ENCODE measurements at regions of chr10 and their contacts with region 1.

Region 1: GRCh38 chr10:77889277-77889903 is 37.2 kb downstream of the DLG5 start:
- DNase-seq: peak; percentile 69
- ATAC-seq: peak; percentile 73
- H3K4me3 Mint-ChIP-seq: peak overlapping the region; percentile 46
- H3K27ac Mint-ChIP-seq: peak overlapping the region; percentile 97
- H3K4me1 Mint-ChIP-seq: peaks cover 93% of the 10 kb centered on the region
- H3K27me3 Mint-ChIP-seq: no peaks in the 10 kb centered on the region
- CTCF ChIP-seq: no peak

Region 2: DNA sequence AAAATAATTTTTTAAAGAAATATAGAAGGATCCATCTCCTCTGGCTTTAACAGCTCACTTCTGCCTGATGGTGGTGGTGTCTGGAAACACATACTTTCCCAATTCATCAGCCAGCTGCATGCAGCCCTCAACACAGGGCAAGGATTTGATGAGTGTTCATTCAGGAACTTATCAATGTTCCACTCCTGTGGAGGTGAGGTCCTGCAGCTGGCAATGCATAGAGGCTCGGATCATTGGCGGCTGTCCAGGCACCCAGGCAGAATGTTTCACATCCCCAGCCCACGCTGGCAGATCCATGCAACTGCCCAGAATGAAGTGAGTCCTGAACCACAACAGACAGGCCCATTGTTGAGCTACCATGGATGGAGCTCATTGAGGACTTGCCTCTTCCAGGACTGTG is 196.6 kb before region 1 on chr10:
- CTCF ChIA-PET with region 1: no interaction called
- POLR2A ChIA-PET with region 1: no interaction called
- DNase-seq: no peak
- ATAC-seq: no peak
- H3K4me3 Mint-ChIP-seq: no peak overlapping the region
- H3K27ac Mint-ChIP-seq: no peak overlapping the region
- H3K4me1 Mint-ChIP-seq: no peaks in the 10 kb centered on the region
- H3K27me3 Mint-ChIP-seq: no peaks in the 10 kb centered on the region
- CTCF ChIP-seq: no peak

Region 3: DNA sequence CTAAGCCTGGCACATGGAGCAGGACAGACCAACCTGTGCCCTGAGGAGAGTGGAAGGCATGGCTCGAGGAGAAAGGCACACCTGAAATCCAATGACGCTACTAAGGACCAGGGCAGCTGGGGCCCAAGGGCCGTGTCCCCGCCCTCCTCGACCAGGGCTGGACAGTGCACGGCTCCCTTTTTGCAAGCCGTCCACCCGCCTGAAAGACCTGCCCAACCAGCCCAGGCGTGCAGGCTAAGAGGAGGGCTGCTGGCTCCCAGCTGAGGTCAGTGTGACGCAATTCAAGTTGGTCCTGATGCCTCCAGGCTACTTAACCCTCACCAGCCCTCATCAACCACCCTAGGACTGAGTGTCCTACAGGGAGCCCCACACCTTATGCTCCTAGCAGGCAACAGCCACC is 32.1 kb before region 1 on chr10:
- CTCF ChIA-PET with region 1: interaction called, 28 read pairs
- POLR2A ChIA-PET with region 1: no interaction called
- DNase-seq: no peak
- ATAC-seq: no peak
- H3K4me3 Mint-ChIP-seq: no peak overlapping the region
- H3K27ac Mint-ChIP-seq: peak overlapping the region; percentile 59
- H3K4me1 Mint-ChIP-seq: peaks cover 12% of the 10 kb centered on the region
- H3K27me3 Mint-ChIP-seq: no peaks in the 10 kb centered on the region
- CTCF ChIP-seq: no peak

Region 4: DNA sequence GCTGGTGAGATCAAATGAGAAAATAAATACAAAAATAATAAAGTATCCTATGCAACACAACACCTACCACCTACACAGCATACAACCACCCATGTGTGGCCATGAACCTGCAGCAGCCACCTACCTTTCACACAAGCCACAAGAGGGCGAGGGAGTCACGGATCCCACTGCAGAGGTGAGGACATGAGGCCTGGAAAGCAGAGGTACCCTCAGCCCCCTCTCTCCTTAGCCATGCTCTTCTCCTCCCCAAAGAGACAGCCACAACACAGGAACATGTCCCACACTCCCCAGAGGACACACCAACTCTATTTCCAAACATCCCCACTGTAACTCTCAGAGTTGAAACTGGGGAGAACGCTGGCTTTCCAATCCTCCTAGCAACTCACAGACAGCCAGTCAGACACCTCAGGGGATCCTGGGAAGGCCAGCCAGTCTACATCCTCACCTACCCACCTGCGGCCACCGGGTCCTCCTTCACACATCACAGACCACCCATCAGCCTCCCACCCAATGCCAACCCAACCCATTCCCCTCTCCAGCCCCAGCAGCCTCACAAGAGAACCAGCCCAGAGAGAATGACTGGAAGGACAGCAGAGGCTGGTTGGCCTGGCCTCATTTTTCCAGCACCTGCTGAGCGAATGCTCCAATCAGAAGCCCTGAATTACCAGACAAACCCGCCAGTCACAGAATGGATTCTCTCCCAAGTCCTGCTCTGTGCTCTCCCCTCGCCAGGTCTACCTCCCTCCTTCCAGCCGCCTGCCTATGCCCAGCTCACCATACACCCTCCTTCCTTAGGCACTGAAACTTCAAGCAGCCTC is 18.7 kb after region 1 on chr10:
- CTCF ChIA-PET with region 1: interaction called, 29 read pairs
- POLR2A ChIA-PET with region 1: no interaction called
- DNase-seq: peak; percentile 57
- ATAC-seq: peak; percentile 93
- H3K4me3 Mint-ChIP-seq: no peak overlapping the region
- H3K27ac Mint-ChIP-seq: peak overlapping the region; percentile 38; the same call in 1 of the 2 replicates
- H3K4me1 Mint-ChIP-seq: peaks cover 38% of the 10 kb centered on the region
- H3K27me3 Mint-ChIP-seq: no peaks in the 10 kb centered on the region
- CTCF ChIP-seq: no peak

Region 5: GRCh38 chr10:77932016-77932715 is 42.8 kb after region 1 on chr10:
- CTCF ChIA-PET with region 1: interaction called, 48 read pairs
- POLR2A ChIA-PET with region 1: interaction called, 3 read pairs
- DNase-seq: no peak
- ATAC-seq: no peak
- H3K4me3 Mint-ChIP-seq: no peak overlapping the region
- H3K27ac Mint-ChIP-seq: no peak overlapping the region
- H3K4me1 Mint-ChIP-seq: peaks cover 20% of the 10 kb centered on the region
- H3K27me3 Mint-ChIP-seq: peaks cover 8% of the 10 kb centered on the region
- CTCF ChIP-seq: no peak

Region 6: GRCh38 chr10:77965294-77965693 is 75.9 kb after region 1 on chr10:
- CTCF ChIA-PET with region 1: interaction called, 15 read pairs
- POLR2A ChIA-PET with region 1: no interaction called
- DNase-seq: no peak
- ATAC-seq: no peak
- H3K4me3 Mint-ChIP-seq: no peak overlapping the region
- H3K27ac Mint-ChIP-seq: no peak overlapping the region
- H3K4me1 Mint-ChIP-seq: peaks cover 6% of the 10 kb centered on the region
- H3K27me3 Mint-ChIP-seq: no peaks in the 10 kb centered on the region; the same call in 1 of the 2 replicates
- CTCF ChIP-seq: no peak